HepG2 (cell line): ENCODE measurements at regions of chr12 and their contacts with region 1.

Region 1: DNA sequence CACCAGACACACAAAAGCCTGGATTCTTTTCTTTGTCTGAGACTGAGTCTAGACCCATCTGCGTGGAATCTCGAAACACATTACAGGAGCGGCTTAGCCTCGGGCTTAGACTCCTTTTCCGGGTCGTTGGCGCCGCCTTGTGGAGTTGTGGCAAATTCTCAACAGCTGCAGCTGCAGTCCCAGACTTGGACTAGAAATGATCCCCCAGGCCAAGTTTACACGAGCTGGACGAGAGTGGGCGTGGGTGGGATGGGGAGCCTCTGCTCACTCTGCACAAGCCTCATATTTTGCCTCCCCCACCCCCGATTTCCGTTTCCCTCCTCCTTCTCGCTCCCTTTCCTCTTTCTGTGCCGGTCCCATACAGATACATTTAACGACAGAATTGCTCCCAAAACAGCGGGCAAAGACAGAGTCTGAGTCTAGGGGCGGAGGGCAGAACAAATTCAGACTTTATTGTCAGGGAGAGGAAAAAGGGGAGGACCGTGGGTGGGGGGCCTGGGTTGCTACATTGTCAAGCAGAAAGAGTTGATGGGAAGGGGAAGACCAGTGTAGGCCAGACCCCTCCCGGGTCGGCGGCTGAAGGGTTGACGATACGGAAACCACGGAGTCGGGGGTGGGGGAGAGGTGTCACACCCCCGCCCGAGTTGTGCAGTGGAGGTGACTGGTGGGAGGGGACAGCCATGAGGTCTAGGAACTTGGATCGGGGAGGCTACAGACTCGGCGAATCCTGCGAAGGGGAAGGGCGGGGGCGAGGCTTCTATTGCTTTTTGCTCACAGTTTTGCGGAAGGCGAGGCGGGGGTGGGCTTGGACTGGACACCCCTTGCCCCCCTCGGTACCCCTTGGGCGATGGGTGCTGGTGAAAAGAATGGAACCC is 4.7 kb upstream of the GPR84 start:
- DNase-seq: peak; percentile 65
- ATAC-seq: peak; percentile 89
- H3K4me3 ChIP-seq: peak overlapping the region in 2 of 3 experiments; percentile 41 to 56; a peak in 4 of 6 replicates
- H3K27ac ChIP-seq: no peak overlapping the region
- H3K4me1 ChIP-seq: peaks cover 21% of the 10 kb centered on the region
- H3K27me3 ChIP-seq: peaks cover 1 to 12% of the 10 kb centered on the region in 2 experiments; a peak in 2 of 5 replicates
- CTCF ChIP-seq: peak; percentile 92
- EP300 ChIP-seq: no peak
- POLR2A ChIP-seq: no peak
- RAD21 ChIP-seq: peak; percentile 73

Region 2: DNA sequence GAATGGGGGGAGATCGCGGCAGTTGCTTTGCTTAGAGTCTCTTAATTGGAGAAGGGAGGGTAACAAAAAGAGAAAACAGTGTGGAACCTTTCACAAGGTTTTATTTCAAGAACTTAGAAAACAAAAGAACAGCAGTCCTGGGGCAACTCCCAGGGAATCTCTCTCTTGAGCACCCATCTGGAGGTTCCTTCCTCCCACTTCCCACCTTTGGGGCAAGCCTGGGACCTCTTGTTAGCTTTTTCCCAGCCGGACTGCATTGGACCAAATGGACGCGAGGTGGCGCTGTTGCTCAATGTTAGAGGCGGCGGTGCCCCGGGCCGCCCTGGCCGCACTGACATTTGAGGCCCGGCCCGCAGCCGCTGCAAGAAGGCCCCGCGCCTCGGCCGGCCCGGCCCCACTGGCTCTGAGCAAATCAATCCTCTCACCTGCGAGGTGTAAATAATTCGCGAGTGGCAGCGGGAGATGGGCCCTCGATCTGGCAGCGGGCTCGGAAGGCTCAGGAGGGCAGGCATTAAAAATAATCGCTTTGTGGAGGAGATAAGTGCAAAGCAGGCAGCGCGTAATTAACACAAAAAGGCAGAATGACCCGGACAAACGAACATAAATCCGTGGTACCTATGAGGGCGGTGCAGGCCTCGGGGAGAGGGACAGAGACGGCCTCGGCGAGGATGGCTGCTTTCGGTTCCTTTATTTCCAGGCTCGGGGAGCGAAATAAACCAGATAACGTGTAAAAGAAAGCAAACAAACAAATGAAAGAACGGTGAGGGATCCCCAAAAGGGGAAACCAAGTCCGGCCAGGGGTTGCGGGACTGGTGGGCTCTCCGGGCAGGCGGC is 362.9 kb before region 1 on chr12:
- CTCF ChIA-PET with region 1: no interaction called
- POLR2A ChIA-PET with region 1: no interaction called
- in situ Hi-C with region 1: loop called (anchors 10 kb)
- intact Hi-C with region 1: loop called (anchors 10 kb)
- DNase-seq: peak; percentile 73
- ATAC-seq: peak; percentile 84
- H3K4me3 ChIP-seq: peak overlapping the region in 1 of 3 experiments; percentile 48; a peak in 2 of 6 replicates
- H3K27ac ChIP-seq: no peak overlapping the region
- H3K4me1 ChIP-seq: peaks cover 24% of the 10 kb centered on the region
- H3K27me3 ChIP-seq: peaks cover 30 to 91% of the 10 kb centered on the region in 2 experiments
- CTCF ChIP-seq: peak; percentile 90
- EP300 ChIP-seq: no peak
- POLR2A ChIP-seq: no peak
- RAD21 ChIP-seq: peak; percentile 96

Region 3: GRCh38 chr12:54017878-54018467 is 351.0 kb before region 1 on chr12:
- CTCF ChIA-PET with region 1: no interaction called
- POLR2A ChIA-PET with region 1: no interaction called
- in situ Hi-C with region 1: loop called (anchors 10 kb)
- intact Hi-C with region 1: no loop called
- DNase-seq: no peak
- ATAC-seq: peak; percentile 85
- H3K4me3 ChIP-seq: peak overlapping the region; percentile 49 to 69 (median 60); a peak in 5 of 6 replicates
- H3K27ac ChIP-seq: no peak overlapping the region
- H3K4me1 ChIP-seq: peaks cover 5% of the 10 kb centered on the region; the same call in 1 of the 2 replicates
- H3K27me3 ChIP-seq: peaks cover 7 to 58% of the 10 kb centered on the region in 2 experiments
- CTCF ChIP-seq: no peak; the same call in 1 of the 2 replicates
- EP300 ChIP-seq: no peak
- POLR2A ChIP-seq: no peak
- RAD21 ChIP-seq: no peak

Region 4: GRCh38 chr12:54220092-54220557 is 148.8 kb before region 1 on chr12:
- CTCF ChIA-PET with region 1: interaction called, 10 read pairs
- POLR2A ChIA-PET with region 1: no interaction called
- in situ Hi-C with region 1: loop called (anchors 5 kb)
- intact Hi-C with region 1: loop called (anchors 1 kb)
- DNase-seq: peak; percentile 45
- ATAC-seq: peak; percentile 76
- H3K4me3 ChIP-seq: no peak overlapping the region
- H3K27ac ChIP-seq: no peak overlapping the region
- H3K4me1 ChIP-seq: peaks cover 32% of the 10 kb centered on the region
- H3K27me3 ChIP-seq: peaks cover 2 to 26% of the 10 kb centered on the region in 2 experiments
- CTCF ChIP-seq: peak; percentile 87
- EP300 ChIP-seq: no peak
- POLR2A ChIP-seq: no peak
- RAD21 ChIP-seq: no peak; the same call in 1 of the 2 replicates

Region 5: GRCh38 chr12:54239620-54240019 is 129.3 kb before region 1 on chr12:
- CTCF ChIA-PET with region 1: no interaction called
- POLR2A ChIA-PET with region 1: no interaction called
- in situ Hi-C with region 1: no loop called
- intact Hi-C with region 1: loop called (anchors 5 kb)
- DNase-seq: no peak
- ATAC-seq: no peak
- H3K4me3 ChIP-seq: no peak overlapping the region
- H3K27ac ChIP-seq: no peak overlapping the region
- H3K4me1 ChIP-seq: no peaks in the 10 kb centered on the region
- H3K27me3 ChIP-seq: no peaks in the 10 kb centered on the region
- CTCF ChIP-seq: no peak
- EP300 ChIP-seq: no peak
- POLR2A ChIP-seq: no peak
- RAD21 ChIP-seq: no peak

Region 6: GRCh38 chr12:54251667-54252284 is 117.2 kb before region 1 on chr12:
- CTCF ChIA-PET with region 1: interaction called, 7 read pairs
- POLR2A ChIA-PET with region 1: no interaction called
- in situ Hi-C with region 1: loop called (anchors 5 kb)
- intact Hi-C with region 1: loop called (anchors 1 kb)
- DNase-seq: peak; percentile 38
- ATAC-seq: peak; percentile 52; the same call in 1 of the 3 replicates
- H3K4me3 ChIP-seq: no peak overlapping the region
- H3K27ac ChIP-seq: no peak overlapping the region
- H3K4me1 ChIP-seq: no peaks in the 10 kb centered on the region
- H3K27me3 ChIP-seq: no peaks in the 10 kb centered on the region
- CTCF ChIP-seq: peak; percentile 59
- EP300 ChIP-seq: no peak
- POLR2A ChIP-seq: no peak
- RAD21 ChIP-seq: peak; percentile 32; the same call in 1 of the 2 replicates

Region 7: GRCh38 chr12:54379401-54380201 is 10.7 kb after region 1 on chr12:
- CTCF ChIA-PET with region 1: interaction called, 27 read pairs
- POLR2A ChIA-PET with region 1: interaction called, 4 read pairs
- in situ Hi-C with region 1: no loop called
- intact Hi-C with region 1: no loop called
- DNase-seq: peak; percentile 79
- ATAC-seq: peak; percentile 92
- H3K4me3 ChIP-seq: peak overlapping the region; percentile 38 to 71 (median 55)
- H3K27ac ChIP-seq: no peak overlapping the region
- H3K4me1 ChIP-seq: peaks cover 23% of the 10 kb centered on the region
- H3K27me3 ChIP-seq: peaks cover 0 to 21% of the 10 kb centered on the region in 2 experiments; a peak in 2 of 5 replicates
- CTCF ChIP-seq: peak; percentile 100
- EP300 ChIP-seq: no peak
- POLR2A ChIP-seq: no peak
- RAD21 ChIP-seq: peak; percentile 89

Region 8: GRCh38 chr12:54631988-54632728 is 263.2 kb after region 1 on chr12:
- CTCF ChIA-PET with region 1: no interaction called
- POLR2A ChIA-PET with region 1: no interaction called
- in situ Hi-C with region 1: no loop called
- intact Hi-C with region 1: no loop called
- DNase-seq: no peak
- ATAC-seq: 0 out of 3 replicates have a peak, but pooled peaks have one; percentile 35
- H3K4me3 ChIP-seq: no peak overlapping the region
- H3K27ac ChIP-seq: no peak overlapping the region
- H3K4me1 ChIP-seq: no peaks in the 10 kb centered on the region
- H3K27me3 ChIP-seq: peaks cover 3 to 15% of the 10 kb centered on the region in 2 experiments; a peak in 4 of 5 replicates
- CTCF ChIP-seq: no peak
- EP300 ChIP-seq: no peak
- POLR2A ChIP-seq: no peak
- RAD21 ChIP-seq: no peak